Transverse colon (tissue), 4 donors: ENCODE measurements at regions of chr10 and their contacts with region 1.

Region 1: DNA sequence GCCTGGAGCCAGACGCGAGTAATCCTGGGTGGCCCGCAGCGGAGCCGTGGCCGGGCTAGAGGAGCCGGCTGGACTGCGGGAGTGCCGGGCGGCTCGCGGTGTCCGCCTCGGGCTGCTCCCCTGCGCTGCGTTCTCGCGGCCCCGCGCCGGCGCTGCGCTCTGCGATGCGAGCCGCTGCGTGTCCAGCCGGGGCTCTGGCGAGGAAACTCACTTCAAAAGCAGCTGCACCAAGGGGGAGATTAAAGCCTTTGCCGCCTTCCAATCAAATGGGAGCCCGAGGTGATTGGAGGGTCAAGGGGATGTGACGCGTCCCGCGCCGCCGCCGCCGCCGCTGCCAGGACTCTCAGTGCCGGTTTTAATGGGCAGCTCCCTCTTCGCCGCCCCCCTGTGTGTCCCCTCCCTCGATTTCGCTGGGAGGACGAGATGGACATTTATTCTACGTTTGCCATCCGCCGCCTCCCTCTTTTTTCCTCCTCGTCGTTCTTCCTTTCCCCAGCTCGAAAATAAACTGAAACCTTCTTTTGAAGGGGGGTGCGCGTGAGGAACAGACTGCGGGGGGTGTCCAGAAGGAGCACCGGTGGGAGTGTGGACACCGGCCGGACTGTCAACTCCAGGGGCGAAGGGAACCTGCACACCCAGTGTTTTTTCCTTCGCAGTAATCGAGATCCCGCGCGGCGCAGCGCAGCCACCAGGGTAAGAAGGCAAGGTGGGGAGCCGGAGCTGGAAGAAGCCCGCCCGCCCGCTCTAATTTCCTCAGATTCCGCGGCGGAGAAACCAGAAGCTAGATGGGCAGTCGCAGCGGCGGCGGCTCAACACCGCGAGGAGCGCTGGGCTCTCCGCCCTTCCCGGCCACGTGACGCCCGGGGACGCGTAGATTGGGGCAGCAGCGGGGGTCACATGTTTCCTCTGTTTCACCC is at the start of gene ZNF503:
- DNase-seq: peak; percentile 94
- H3K4me3 ChIP-seq: peak within 1 kb of the TSS; percentile 70 to 88 (median 80)
- H3K27ac ChIP-seq: peak within 1 kb of the TSS; percentile 94 to 99 (median 97)
- H3K4me1 ChIP-seq: peaks cover 0 to 39% (median 25%) of the 10 kb centered on the region in 4 donors
- H3K27me3 ChIP-seq: peaks cover 20% of the 10 kb centered on the region
- CTCF ChIP-seq: peak; percentile 13 to 67 (median 28)
- EP300 ChIP-seq: no peak
- POLR2A ChIP-seq: peak; percentile 82
- total RNA-seq, gene ZNF503: 3.0 to 17.9 (median 7.2) TPM

Region 2: DNA sequence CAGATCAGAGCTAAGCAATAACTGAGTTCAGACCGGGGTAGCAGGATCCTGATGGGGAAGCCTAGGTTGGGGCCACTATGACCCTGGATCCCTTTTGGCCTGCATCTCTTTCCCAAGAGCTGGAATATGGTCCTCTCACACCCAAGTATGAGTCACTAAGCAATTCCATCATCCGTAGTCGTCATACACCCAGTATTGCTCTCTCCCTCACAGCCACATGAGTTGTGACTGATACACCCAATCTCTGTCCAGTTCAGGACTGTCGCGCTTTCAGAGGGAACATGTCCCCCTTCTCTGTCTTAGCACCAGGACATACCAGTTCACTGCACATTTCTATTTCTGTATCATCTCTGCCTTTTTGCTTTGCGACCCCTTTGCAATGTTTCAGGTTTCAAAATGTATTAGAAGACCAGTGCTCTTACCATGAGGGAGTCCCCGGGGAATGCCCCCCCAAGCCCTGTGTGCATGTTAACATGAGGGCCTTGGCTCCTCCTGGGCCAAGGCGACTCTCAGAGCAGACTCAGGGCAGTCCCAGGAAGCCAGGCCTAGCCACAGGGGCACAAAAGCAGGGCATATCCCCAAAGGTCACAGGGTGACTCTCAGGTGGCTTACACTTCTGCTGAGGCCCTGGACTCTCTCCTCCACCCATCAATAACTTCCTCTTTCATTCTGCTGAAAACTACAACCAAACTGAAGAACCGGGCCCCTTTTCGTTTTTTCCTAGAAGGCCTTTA is 365.7 kb before region 1 on chr10:
- in situ Hi-C with region 1: no loop called
- intact Hi-C with region 1: no loop called
- DNase-seq: no peak
- H3K4me3 ChIP-seq: no peak overlapping the region
- H3K27ac ChIP-seq: no peak overlapping the region
- H3K4me1 ChIP-seq: no peaks in the 10 kb centered on the region
- H3K27me3 ChIP-seq: no peaks in the 10 kb centered on the region
- CTCF ChIP-seq: no peak
- EP300 ChIP-seq: no peak
- POLR2A ChIP-seq: no peak

Region 3: DNA sequence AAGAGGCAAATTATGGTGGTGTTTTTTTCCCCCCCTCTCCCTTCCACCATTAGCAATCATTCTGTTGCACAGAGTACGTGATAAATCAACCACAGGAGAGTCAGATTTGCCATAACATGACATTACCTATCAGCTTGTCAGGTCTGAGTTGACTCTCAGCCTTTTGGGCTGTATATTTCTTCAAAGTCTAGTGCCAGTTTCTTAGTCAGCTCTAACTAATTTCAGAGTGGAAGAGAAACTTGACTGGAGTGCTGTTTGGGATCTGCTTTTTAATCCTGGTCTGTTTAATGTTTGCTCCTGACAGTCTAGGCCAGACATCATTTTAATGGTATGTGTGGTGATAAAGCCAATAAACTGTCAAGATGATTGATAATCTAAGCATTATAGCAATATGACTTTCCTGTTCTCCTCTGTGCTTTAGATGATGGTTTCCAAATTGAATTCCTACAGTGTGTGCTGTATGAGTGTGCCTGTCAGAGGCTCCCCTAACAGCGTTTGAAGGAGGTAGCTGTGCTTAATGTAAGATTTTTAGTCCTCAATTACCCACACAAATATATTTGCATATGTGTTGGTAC is 106.5 kb after region 1 on chr10:
- in situ Hi-C with region 1: no loop called
- intact Hi-C with region 1: loop called (anchors 2 kb)
- DNase-seq: no peak
- H3K4me3 ChIP-seq: no peak overlapping the region
- H3K27ac ChIP-seq: peak overlapping the region; percentile 16 to 66 (median 53)
- H3K4me1 ChIP-seq: peaks cover 0 to 39% (median 17%) of the 10 kb centered on the region in 4 donors
- H3K27me3 ChIP-seq: no peaks in the 10 kb centered on the region
- CTCF ChIP-seq: no peak
- EP300 ChIP-seq: peak; percentile 20
- POLR2A ChIP-seq: no peak

Region 4: GRCh38 chr10:75632805-75633462 is 231.1 kb after region 1 on chr10:
- in situ Hi-C with region 1: loop called in 2 of 4 experiments (anchors 25 kb)
- intact Hi-C with region 1: no loop called
- DNase-seq: no peak
- H3K4me3 ChIP-seq: no peak overlapping the region
- H3K27ac ChIP-seq: peak overlapping the region in 2 of 4 donors; percentile 31 to 45
- H3K4me1 ChIP-seq: no peaks in the 10 kb centered on the region
- H3K27me3 ChIP-seq: no peaks in the 10 kb centered on the region
- CTCF ChIP-seq: no peak
- EP300 ChIP-seq: no peak
- POLR2A ChIP-seq: no peak

Region 5: DNA sequence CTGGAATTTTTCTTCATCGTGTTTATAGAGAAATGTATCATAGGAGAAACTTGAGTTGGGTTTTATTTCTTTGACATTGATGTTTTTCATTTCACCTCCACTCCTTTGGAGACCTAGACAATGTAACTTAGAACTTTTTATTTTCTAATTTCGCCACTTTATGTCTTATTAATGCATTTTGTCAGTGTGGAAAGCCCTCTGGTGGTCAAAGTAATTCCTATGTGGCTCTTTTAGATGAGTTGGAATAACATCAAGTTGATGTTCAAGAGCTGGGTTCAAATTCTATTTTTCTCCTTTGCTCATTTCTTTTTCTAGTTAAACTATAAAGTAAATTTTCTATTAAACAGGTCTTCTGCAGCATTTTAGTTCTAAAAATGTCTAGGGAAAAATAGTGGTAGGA is 508.2 kb after region 1 on chr10:
- in situ Hi-C with region 1: loop called in 3 of 4 experiments (anchors 25 kb)
- intact Hi-C with region 1: loop called (anchors 10 kb)
- DNase-seq: no peak
- H3K4me3 ChIP-seq: no peak overlapping the region
- H3K27ac ChIP-seq: no peak overlapping the region
- H3K4me1 ChIP-seq: no peaks in the 10 kb centered on the region
- H3K27me3 ChIP-seq: no peaks in the 10 kb centered on the region
- CTCF ChIP-seq: peak; percentile 44 to 57 (median 52)
- EP300 ChIP-seq: no peak
- POLR2A ChIP-seq: no peak

Region 6: GRCh38 chr10:76303682-76304316 is 902.0 kb after region 1 on chr10:
- in situ Hi-C with region 1: loop called in 1 of 4 experiments (anchors 25 kb)
- intact Hi-C with region 1: no loop called
- DNase-seq: peak; percentile 63
- H3K4me3 ChIP-seq: no peak overlapping the region
- H3K27ac ChIP-seq: peak overlapping the region in 1 of 4 donors; percentile 29
- H3K4me1 ChIP-seq: peaks cover 0 to 19% (median 2%) of the 10 kb centered on the region in 4 donors
- H3K27me3 ChIP-seq: no peaks in the 10 kb centered on the region
- CTCF ChIP-seq: peak; percentile 26 to 52 (median 41)
- EP300 ChIP-seq: no peak
- POLR2A ChIP-seq: no peak

Region 7: GRCh38 chr10:77004917-77005564 is 1603.2 kb after region 1 on chr10:
- in situ Hi-C with region 1: no loop called
- intact Hi-C with region 1: loop called (anchors 10 kb)
- DNase-seq: no peak
- H3K4me3 ChIP-seq: no peak overlapping the region
- H3K27ac ChIP-seq: peak overlapping the region in 1 of 4 donors; percentile 3
- H3K4me1 ChIP-seq: peaks cover 0 to 7% (median 2%) of the 10 kb centered on the region in 4 donors
- H3K27me3 ChIP-seq: no peaks in the 10 kb centered on the region
- CTCF ChIP-seq: peak; percentile 60 to 77 (median 73)
- EP300 ChIP-seq: no peak
- POLR2A ChIP-seq: no peak